PC-9 (cell line): ENCODE measurements at regions of chr15 and their contacts with region 1.

Region 1: DNA sequence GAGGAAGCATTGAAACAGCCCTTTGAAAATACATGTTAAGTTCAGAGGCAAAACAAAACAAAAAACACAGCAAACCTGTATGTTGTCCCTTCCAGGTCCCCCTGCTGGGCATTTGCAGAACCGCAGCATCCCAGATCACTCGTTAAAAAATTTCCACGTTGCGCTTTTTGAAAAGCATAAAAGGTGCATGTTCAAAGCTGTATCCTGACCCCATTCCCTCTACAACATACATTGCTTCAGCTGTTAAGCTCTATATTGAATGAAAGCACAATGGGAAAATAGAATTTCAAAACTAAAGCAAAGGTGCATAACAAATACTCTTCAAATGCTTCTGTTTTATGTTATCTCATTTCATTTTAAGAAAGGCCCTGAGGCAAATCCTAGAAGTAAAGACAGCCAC is 328.3 kb downstream of the THSD4 start:
- DNase-seq: peak in 1 of 2 experiments; percentile 45
- H3K4me3 ChIP-seq: no peak overlapping the region
- H3K27ac ChIP-seq: no peak overlapping the region
- H3K4me1 ChIP-seq: peaks cover 63% of the 10 kb centered on the region
- H3K27me3 ChIP-seq: no peaks in the 10 kb centered on the region
- CTCF ChIP-seq: peak; percentile 80

Region 2: GRCh38 chr15:70892002-70892914 is 551.3 kb before region 1 on chr15 and contains the starts of genes LRRC49 and THAP10:
- CTCF ChIA-PET with region 1: interaction called, 3 read pairs
- POLR2A ChIA-PET with region 1: no interaction called
- intact Hi-C with region 1: loop called (anchors 2 kb)
- DNase-seq: peak; percentile 87 to 88
- H3K4me3 ChIP-seq: peak within 1 kb of the TSS; percentile 91
- H3K27ac ChIP-seq: peak within 1 kb of the TSS; percentile 54
- H3K4me1 ChIP-seq: peaks cover 22% of the 10 kb centered on the region
- H3K27me3 ChIP-seq: no peaks in the 10 kb centered on the region
- CTCF ChIP-seq: no peak
- total RNA-seq, gene LRRC49: 6.2 and 6.3 TPM in 2 replicates
- total RNA-seq, gene THAP10: 4.2 and 5.5 TPM in 2 replicates

Region 3: DNA sequence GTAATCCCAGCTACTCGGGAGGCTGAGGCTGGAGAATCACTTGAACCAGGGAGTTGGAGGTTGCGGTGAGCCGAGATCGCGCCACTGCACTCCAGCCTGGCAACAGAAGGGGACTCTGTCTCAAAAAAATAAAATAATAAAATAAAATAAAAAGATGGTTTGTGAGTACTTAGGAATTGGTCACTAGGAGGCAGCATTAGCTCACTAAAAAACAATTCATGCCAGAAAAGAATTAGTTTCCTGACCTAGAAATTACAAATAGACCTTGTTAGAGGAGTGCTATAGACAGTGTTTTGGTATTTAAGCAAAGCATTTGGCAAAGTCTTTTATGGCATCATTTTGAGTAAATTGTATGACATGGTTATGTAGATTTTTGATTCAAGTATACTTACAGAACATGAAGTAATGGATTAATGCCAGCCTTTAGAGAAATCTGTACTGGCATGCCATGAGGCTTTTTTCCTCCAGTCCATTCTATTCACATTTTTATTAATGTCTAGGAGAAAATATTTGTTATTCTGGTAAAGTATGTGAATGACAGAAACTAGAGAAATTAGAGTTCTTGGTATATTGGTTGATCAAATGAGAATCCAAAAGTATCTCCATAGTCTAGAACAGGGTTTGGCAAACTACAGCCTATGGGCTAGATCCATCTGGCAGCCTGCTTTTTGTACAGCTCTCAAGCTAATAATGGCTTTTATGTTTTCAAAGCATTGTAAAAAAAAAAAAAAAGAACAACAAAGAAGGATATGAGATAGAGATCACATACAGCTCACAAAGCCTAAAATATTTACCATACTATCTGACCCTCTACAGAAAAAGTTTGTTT is 469.3 kb before region 1 on chr15:
- CTCF ChIA-PET with region 1: no interaction called
- POLR2A ChIA-PET with region 1: no interaction called
- intact Hi-C with region 1: loop called (anchors 1 kb)
- DNase-seq: peak in 1 of 2 experiments; percentile 1
- H3K4me3 ChIP-seq: no peak overlapping the region
- H3K27ac ChIP-seq: no peak overlapping the region
- H3K4me1 ChIP-seq: no peaks in the 10 kb centered on the region
- H3K27me3 ChIP-seq: no peaks in the 10 kb centered on the region
- CTCF ChIP-seq: peak; percentile 67

Region 4: GRCh38 chr15:71011503-71012155 is 431.9 kb before region 1 on chr15:
- CTCF ChIA-PET with region 1: no interaction called
- POLR2A ChIA-PET with region 1: interaction called, 3 read pairs
- intact Hi-C with region 1: loop called (anchors 1 kb)
- DNase-seq: peak in 1 of 2 experiments; percentile 21
- H3K4me3 ChIP-seq: no peak overlapping the region
- H3K27ac ChIP-seq: no peak overlapping the region
- H3K4me1 ChIP-seq: no peaks in the 10 kb centered on the region
- H3K27me3 ChIP-seq: no peaks in the 10 kb centered on the region
- CTCF ChIP-seq: peak; percentile 83

Region 5: DNA sequence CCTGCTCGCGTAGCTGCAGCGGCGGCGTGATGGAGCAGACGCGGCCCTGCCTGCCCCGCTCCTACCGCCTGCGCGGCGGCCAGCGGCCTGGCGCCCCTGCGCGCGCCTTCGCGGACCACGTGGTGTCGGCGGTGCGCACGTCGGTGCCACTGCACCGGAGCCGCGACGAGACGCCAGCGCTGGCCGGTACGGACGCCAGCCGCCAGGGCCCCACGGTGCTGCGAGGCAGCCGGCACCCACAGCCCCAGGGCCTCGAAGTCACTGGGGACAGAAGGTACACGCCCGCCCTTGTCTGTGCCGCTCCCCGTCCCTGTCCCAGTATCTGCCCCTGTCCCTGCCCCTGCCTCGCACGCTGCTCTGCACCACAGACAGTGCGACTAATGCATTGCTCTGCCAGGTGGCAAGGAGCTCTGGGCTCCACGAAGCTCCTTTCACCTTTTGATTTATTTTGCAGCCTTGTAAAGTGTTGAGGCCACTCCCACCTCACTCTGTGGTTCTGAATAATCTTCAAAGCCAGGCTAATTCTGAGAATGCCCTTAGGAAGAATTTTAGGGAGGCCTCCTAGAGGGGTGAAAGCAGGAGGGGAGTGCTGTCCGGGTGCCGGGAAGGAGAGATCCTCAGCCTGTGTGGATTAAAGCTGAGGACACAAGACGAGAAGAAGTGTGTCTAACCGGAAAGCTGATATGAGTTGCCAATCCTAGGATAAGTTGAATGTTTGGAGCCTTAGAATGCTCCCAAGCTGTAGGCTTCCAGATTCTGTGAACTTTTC is 228.2 kb before region 1 on chr15:
- CTCF ChIA-PET with region 1: no interaction called
- POLR2A ChIA-PET with region 1: no interaction called
- intact Hi-C with region 1: no loop called
- DNase-seq: no peak
- H3K4me3 ChIP-seq: no peak overlapping the region
- H3K27ac ChIP-seq: no peak overlapping the region
- H3K4me1 ChIP-seq: no peaks in the 10 kb centered on the region
- H3K27me3 ChIP-seq: no peaks in the 10 kb centered on the region
- CTCF ChIP-seq: no peak

Region 6: DNA sequence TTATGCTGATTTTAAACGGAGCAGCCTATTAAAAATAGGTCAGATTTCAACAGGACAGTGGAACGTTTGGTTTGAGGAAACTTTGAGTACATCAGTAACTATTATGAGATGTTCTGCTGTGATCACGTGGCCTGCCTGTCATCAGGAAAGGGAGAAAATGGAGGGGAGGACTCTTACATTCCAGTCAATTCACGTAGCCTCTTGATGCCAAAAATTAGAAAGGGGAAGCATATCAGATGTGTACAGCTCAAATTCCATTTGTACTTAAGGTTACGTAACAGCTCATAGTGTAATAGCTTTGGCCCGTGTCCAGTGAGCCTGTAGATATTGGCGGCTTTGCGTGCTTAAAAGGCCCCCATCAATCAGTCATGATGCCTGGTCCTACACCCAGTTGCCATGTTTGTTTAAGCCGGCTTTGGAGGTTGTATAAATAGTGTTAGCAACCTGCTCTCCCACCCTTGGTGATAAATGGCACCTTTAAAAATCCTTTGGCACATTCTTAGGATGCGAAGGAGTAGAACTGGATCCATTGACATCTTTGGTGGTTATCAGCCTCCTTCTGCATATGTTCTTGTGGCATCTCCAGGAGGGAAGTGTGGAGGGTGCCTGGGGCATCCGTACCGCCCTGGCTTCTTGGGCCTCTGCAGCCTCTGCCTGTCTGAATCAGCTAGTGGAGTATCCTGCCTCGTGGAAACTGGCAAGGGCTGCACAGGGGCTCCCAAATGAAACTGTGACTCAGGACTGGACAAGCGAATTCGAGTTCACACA is 164.4 kb before region 1 on chr15:
- CTCF ChIA-PET with region 1: no interaction called
- POLR2A ChIA-PET with region 1: interaction called, 5 read pairs
- intact Hi-C with region 1: loop called (anchors 1 kb)
- DNase-seq: peak; percentile 77 to 96
- H3K4me3 ChIP-seq: 0 out of 2 replicates have a peak overlapping the region, but pooled peaks have one; percentile 10
- H3K27ac ChIP-seq: peak overlapping the region; percentile 99
- H3K4me1 ChIP-seq: peaks cover 75% of the 10 kb centered on the region
- H3K27me3 ChIP-seq: no peaks in the 10 kb centered on the region
- CTCF ChIP-seq: no peak

Region 7: GRCh38 chr15:71386448-71387236 is 56.9 kb before region 1 on chr15:
- CTCF ChIA-PET with region 1: interaction called, 15 read pairs
- POLR2A ChIA-PET with region 1: no interaction called
- intact Hi-C with region 1: no loop called
- DNase-seq: no peak
- H3K4me3 ChIP-seq: no peak overlapping the region
- H3K27ac ChIP-seq: no peak overlapping the region
- H3K4me1 ChIP-seq: 0 out of 2 replicates have a peak, but pooled peaks cover 7% of the 10 kb centered on the region
- H3K27me3 ChIP-seq: no peaks in the 10 kb centered on the region
- CTCF ChIP-seq: peak; percentile 59